Breast epithelium (tissue), 4 donors: ENCODE measurements at regions of chr17 and their contacts with region 1.

Region 1: DNA sequence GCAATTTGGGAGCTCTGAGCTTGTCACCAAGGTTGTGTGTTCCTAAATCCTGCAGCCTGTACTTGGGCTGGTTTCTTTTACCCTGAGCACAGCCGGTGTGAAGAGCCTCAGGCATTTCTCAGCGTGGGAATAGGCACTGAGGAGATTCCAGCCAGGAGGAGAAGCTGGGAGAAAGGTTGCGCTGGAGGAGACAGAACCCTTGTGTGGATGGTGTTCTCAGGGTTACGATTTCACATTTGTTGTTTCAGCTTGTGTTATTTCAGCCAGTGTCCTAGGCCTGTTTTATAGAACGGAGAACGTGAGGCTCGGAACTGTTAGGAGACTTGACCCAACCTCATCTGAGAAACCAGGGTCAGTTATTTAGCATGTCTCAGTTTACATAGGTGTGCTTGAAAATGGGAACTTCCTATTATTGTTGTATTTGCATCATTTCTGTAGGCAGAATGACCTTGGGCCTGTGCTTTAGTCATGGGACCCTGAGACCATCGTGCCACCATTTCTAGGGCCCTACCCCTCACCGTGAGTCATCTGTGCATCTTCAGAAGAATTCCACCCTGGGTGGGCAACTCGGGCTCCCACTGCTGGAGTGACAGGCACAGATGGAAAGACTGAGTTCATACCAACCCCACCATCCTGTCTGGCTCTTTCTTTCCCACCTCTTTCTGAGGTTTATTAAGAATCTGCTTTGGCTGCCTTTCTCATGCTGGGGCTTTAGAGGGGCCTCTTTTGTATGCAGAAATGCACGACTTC is 134.9 kb downstream of the MSI2 start:
- DNase-seq: no peak
- H3K4me3 ChIP-seq: no peak overlapping the region
- H3K27ac ChIP-seq: no peak overlapping the region
- H3K4me1 ChIP-seq: no peaks in the 10 kb centered on the region
- H3K27me3 ChIP-seq: no peaks in the 10 kb centered on the region
- CTCF ChIP-seq: no peak
- POLR2A ChIP-seq: no peak

Region 2: DNA sequence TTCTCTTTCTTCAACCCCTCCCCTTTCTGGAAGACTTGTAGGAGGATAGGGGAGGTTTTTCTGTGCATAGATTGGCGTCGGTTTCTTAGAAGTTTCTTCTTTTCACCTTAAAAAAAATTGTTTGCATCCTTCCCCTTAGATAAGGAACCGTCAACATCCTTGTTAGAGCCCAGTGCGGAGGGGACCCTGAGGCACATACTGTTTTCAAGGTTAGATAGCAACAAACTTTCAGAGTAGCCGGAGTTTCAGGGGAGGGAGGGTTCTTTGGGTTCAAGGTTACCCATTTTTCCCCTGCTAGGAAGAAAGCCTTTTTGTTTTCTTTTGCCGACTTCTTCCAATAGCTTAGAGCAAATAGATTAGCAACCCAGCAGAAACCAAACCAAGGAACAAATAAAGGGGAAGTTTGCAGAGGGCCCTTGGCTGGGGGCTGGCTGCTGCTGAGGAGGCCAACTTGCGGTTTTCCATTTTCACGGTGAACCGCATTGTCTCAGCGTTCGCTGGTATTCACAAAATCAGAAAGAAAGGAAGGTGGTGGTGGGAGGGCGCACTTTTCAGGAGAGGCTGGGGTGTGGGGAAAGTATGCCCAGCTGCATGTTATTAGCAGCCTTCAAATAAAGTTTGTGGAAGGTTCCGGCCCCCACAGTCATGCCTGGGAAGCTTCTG is 106.1 kb before region 1 on chr17:
- intact Hi-C with region 1: no loop called
- DNase-seq: no peak
- H3K4me3 ChIP-seq: peak overlapping the region in 1 of 3 donors; percentile 29
- H3K27ac ChIP-seq: peak overlapping the region; percentile 69 to 84
- H3K4me1 ChIP-seq: no peaks in the 10 kb centered on the region
- H3K27me3 ChIP-seq: no peaks in the 10 kb centered on the region
- CTCF ChIP-seq: no peak
- POLR2A ChIP-seq: no peak

Region 3: GRCh38 chr17:57440522-57441485 is 49.6 kb after region 1 on chr17:
- intact Hi-C with region 1: loop called (anchors 1 kb)
- DNase-seq: peak in 1 of 2 donors; percentile 63
- H3K4me3 ChIP-seq: no peak overlapping the region
- H3K27ac ChIP-seq: peak overlapping the region; percentile 67 to 78
- H3K4me1 ChIP-seq: peaks cover 8 to 39% of the 10 kb centered on the region in 2 donors
- H3K27me3 ChIP-seq: no peaks in the 10 kb centered on the region
- CTCF ChIP-seq: peak in 1 of 3 donors; percentile 22
- POLR2A ChIP-seq: no peak